ENCODE measurements at regions of chr10 and their contacts with region 1.

Region 1: DNA sequence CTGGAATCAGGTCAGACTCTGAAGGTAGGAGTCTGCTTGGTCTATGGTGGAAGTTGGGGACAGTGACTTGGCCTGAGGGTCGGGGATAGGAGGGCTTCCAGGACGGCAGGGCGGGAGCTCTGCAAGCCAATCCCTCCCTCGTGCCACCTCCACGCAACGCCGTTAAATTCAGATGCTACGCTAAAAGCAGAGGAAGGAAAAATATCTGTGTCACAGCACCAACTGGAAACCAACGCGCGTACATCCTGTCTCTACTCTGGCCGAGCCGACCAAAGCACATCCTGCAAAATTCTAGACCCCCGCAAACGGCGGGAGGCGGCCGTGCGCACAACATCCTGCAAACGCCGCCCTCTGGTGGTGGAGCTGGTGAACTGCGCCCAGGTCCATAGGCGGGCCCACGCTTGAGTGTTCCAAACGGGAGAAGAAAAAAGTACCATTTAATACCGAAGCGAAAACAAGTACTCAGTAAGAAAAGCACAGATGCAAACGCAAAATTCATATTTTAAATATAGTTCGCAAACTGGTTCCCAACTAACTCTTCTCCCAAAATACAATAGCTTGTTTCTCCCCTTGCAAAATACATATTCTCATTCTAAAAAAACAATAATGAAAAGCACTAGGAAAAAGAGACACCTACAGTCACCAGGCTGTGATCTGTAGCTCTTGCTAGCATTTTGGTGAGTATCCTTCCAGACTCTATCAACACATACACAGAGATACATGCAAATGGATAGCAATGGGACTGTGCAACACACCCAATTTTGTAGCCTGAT is 45.7 kb upstream of the HSPA12A start:
- DNase-seq: no peak
- H3K4me3 ChIP-seq: peak overlapping the region; percentile 49
- CTCF ChIP-seq: peak; percentile 95

Region 2: GRCh38 chr10:116627386-116627933 is 160.6 kb before region 1 on chr10:
- CTCF ChIA-PET with region 1: interaction called, 25 read pairs
- POLR2A ChIA-PET with region 1: no interaction called
- DNase-seq: no peak
- H3K4me3 ChIP-seq: no peak overlapping the region
- CTCF ChIP-seq: peak; percentile 46

Region 3: GRCh38 chr10:116690356-116691322 is 97.4 kb before region 1 on chr10:
- CTCF ChIA-PET with region 1: interaction called, 658 read pairs
- POLR2A ChIA-PET with region 1: interaction called, 3 read pairs
- DNase-seq: no peak
- H3K4me3 ChIP-seq: no peak overlapping the region
- CTCF ChIP-seq: peak; percentile 2

Region 4: DNA sequence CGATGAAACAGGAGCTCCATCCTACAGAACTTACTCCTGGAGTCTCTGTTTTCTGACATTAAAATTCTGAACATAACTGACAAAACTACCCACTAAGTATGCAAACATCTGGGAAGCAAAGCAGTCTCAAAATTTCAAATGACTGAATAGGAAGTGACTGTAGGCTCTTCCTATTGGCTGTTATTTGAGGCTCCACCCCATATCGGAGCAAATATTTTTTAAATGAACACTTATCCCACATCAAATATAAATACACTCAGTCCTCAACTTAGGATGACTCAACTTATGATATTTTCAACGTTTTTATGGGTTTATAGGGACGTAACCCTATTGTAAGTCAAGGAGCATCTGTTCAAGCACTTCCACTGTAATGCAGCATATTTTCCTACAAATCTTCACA is 54.5 kb before region 1 on chr10:
- CTCF ChIA-PET with region 1: interaction called, 17 read pairs
- POLR2A ChIA-PET with region 1: no interaction called
- DNase-seq: peak; percentile 44
- H3K4me3 ChIP-seq: no peak overlapping the region
- CTCF ChIP-seq: no peak

Region 5: DNA sequence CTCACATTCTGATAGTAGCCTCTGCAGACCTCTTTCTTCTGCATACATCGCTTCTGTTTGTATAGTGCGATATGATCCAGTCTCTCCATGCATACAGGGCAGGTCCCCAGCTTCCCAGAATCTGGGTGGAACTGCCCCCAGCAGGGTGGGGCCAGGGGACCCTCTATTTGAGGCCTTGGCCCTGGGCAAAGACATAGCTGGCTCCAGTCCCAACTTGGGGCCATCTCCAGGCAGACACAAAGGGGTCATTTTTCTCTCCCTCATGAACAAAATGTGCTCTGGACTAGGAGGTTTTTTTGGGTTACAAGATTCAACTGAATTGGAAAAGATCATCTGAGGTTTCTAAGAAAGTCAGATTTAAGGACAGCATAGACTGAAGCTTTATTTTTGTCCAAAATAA is 24.6 kb before region 1 on chr10:
- CTCF ChIA-PET with region 1: interaction called, 10 read pairs
- POLR2A ChIA-PET with region 1: no interaction called
- DNase-seq: no peak
- H3K4me3 ChIP-seq: no peak overlapping the region
- CTCF ChIP-seq: no peak

Region 6: DNA sequence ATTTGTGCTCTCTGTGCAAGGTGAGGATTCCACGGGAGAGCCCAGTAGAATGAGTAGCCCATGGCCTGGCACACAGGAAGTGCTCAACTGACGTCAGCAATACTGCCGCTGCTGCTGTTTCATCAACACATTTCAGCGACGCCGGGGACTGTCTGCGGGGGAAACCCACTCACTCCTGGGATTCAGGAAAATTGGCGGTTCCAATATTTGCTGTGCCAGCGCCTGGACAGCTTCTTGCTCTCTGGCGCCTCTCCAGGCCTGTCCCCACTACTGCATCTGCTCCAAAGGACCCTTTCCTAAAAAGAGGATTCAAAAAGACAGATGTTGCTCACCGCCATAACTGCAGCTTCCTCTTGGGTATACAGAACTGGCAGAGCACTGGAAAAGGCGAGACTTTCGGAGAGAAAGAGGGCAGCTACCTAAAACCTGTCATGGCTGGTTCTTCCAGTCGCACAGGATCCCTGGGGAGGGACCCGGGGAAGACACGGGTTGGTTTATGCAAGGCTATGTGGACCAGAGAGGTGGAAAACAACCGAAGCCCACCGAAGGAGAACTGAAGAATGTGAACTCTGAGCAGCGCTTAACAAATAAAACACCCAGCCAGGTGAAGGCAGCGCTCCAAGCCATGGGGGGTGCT is 21.5 kb after region 1 on chr10:
- CTCF ChIA-PET with region 1: interaction called, 18 read pairs
- POLR2A ChIA-PET with region 1: no interaction called
- DNase-seq: no peak
- H3K4me3 ChIP-seq: no peak overlapping the region
- CTCF ChIP-seq: no peak

Region 7: DNA sequence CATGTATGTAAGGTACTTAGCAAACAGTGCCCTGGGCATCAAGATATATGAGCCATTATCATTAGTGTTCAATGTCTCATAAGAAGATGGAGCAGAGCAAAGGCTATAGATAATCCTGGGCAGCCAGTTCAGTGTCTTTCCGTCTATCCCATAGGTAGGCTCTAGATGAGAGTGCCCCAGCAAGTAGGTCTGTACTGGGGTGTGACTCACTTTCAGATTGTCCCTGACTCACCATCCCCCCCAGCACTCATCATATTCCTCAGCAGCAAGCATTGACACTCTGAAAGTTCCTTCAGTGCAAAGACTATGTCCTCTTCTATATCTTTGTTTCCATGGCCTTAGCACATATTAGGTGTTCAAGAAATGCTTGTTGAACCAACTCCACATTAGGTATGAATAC is 1574.0 kb after region 1 on chr10:
- CTCF ChIA-PET with region 1: no interaction called
- POLR2A ChIA-PET with region 1: no interaction called
- DNase-seq: no peak
- H3K4me3 ChIP-seq: no peak overlapping the region
- CTCF ChIP-seq: no peak

Measured in AG04449 (cell line).